ENCODE measurements at regions of chr13 and their contacts with region 1.

Region 1: GRCh38 chr13:59906413-59907049 is 257.2 kb downstream of the DIAPH3 start:
- DNase-seq: peak; percentile 43
- H3K4me3 Mint-ChIP-seq: no peak overlapping the region
- H3K27ac Mint-ChIP-seq: no peak overlapping the region
- H3K4me1 Mint-ChIP-seq: peaks cover 6% of the 10 kb centered on the region
- H3K27me3 Mint-ChIP-seq: no peaks in the 10 kb centered on the region
- CTCF ChIP-seq: peak; percentile 50

Region 2: DNA sequence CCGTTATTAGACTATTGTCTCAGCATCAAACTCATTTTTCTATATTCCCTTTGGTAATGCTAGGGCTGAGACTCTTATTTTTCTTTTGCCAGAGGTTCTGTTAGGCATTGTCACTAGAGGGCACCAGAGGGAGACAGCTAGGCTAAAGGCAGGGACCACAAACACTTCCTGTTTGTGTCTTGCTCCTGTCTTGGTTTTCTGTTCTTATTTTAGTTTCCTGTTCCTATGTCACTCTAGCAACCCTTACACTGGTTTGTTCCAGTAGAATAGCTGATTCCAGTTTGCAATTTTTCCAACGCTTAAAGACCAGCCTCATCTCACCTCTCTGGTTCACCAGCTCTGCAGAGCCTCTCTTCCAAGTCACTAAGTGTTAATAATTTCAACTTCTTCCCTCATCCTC is 514.8 kb before region 1 on chr13:
- CTCF ChIA-PET with region 1: interaction called, 39 read pairs
- POLR2A ChIA-PET with region 1: no interaction called
- intact Hi-C with region 1: loop called (anchors 1 kb)
- DNase-seq: peak; percentile 75
- H3K4me3 Mint-ChIP-seq: no peak overlapping the region
- H3K27ac Mint-ChIP-seq: no peak overlapping the region
- H3K4me1 Mint-ChIP-seq: no peaks in the 10 kb centered on the region
- H3K27me3 Mint-ChIP-seq: peaks cover 37% of the 10 kb centered on the region
- CTCF ChIP-seq: peak; percentile 71

Region 3: GRCh38 chr13:59684105-59684504 is 222.4 kb before region 1 on chr13:
- CTCF ChIA-PET with region 1: interaction called, 72 read pairs
- POLR2A ChIA-PET with region 1: interaction called, 4 read pairs
- intact Hi-C with region 1: loop called (anchors 1 kb)
- DNase-seq: no peak
- H3K4me3 Mint-ChIP-seq: no peak overlapping the region
- H3K27ac Mint-ChIP-seq: no peak overlapping the region
- H3K4me1 Mint-ChIP-seq: no peaks in the 10 kb centered on the region
- H3K27me3 Mint-ChIP-seq: no peaks in the 10 kb centered on the region
- CTCF ChIP-seq: no peak

Region 4: DNA sequence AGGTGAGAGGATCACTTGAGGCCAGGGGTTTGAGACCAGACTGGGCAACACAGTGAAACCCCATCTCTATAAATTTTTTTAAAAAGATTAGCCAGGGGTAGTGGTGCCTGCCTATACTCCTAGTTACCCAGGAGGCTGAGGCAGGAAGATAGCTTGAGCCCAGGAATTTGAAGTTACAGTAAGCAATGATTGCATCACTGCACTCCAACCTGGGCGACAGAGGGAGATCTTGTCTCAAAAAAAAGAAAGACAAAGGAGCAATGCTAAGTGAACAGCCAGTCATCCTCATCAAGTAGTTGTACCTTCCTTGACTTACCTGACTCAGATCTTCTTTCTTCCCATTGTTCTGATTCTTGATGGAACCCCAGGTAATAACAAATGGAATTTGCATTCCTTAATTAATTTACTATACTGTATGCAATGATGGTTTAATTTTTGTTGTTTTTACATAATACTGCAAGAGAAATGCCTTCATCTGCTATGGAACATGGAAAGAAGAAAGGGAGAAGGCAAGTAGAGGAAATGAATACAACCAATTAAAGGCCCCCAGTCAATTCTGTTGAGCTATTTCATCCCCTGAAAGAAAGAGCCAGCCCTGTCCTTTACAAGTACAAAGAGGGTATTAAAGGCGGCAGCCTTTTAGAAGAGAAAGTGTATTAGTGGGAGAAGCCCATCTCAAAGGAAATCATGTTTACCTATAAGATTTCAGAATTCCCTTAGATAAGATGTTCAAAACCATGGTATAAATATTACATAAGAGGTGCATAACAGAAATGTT is 59.5 kb before region 1 on chr13:
- CTCF ChIA-PET with region 1: interaction called, 11 read pairs
- POLR2A ChIA-PET with region 1: no interaction called
- intact Hi-C with region 1: no loop called
- DNase-seq: peak; percentile 45
- H3K4me3 Mint-ChIP-seq: no peak overlapping the region
- H3K27ac Mint-ChIP-seq: no peak overlapping the region
- H3K4me1 Mint-ChIP-seq: no peaks in the 10 kb centered on the region
- H3K27me3 Mint-ChIP-seq: no peaks in the 10 kb centered on the region
- CTCF ChIP-seq: no peak

Region 5: DNA sequence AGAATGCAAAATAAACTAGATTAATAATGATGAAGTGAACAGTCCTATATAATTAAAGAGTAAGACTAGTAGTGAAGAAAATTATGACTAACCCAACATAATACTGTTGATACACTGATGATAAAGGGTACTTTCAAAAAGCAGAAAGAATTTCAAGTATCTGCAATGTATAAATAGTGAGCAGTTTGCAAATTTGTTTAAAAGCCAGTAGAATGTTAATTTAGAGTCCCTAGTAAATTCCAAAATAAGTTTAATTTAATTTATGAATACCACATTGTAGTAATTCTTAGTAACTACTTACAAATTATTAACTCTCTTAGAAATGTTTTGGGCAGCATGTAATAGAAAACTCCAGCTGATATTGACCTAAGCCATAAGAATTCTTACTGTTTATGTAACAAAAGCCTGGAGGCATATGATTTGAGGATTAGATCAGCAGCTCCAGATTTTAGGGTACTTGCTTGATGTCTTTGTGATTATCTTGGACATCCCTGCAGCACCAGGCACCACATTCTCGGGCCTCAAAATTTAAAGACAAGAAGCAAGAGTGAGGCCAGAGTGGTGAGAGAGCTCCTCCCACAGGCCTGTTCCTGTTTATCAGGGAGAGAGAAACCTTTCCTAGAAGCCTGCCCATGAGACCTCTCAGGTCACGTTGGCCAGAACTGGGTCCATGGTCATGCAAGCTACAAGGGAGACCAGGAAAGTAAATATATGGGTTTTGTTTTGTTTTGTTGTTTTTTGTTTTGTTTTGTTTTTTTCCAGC is 422.9 kb after region 1 on chr13:
- CTCF ChIA-PET with region 1: interaction called, 17 read pairs
- POLR2A ChIA-PET with region 1: interaction called, 3 read pairs
- intact Hi-C with region 1: loop called (anchors 2 kb)
- DNase-seq: peak; percentile 53
- H3K4me3 Mint-ChIP-seq: no peak overlapping the region
- H3K27ac Mint-ChIP-seq: no peak overlapping the region
- H3K4me1 Mint-ChIP-seq: no peaks in the 10 kb centered on the region
- H3K27me3 Mint-ChIP-seq: peaks cover 29% of the 10 kb centered on the region
- CTCF ChIP-seq: peak; percentile 62

Measured in MCF 10A (cell line).